ENCODE measurements at regions of chr2 and their contacts with region 1.

Region 1: DNA sequence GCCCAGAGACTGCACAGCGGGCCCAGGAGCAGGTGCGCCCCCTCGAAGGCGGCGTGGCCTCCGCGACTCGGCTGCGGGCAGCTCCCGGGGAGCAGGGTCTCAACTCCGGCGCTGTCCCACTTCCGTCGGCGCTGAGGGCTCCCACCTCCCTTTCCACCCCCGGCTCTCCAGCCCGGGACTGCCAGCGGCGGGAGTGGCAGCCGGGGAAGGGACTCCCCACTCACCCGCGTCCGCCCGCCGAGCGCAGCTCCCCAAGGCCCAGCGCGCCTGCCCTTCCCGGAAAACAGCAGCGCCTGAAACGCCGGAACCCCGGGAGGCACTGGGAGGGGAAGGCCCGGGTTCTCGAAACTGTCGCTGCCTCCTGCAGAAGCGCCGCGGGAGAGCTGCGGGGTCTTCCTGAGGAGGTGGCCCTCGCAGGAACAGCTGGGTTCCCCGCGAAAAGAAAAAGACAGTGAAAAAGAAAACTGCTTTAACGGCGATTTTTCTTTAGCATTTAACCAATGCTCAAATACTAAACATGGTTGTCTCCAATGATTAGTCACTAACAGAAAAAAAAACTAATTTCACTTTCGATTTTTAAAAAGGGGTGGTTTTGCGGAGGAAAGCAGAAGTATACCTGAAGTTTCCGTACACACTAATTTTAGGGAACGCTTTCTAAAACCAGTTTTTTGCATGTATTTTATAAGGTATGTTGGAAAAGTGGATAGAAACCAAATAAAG is at the start of gene NMI:
- DNase-seq: peak; percentile 18 to 88 (median 74)

Region 2: GRCh38 chr2:150878356-150878755 is 411.2 kb before region 1 on chr2:
- intact Hi-C with region 1: no loop called
- DNase-seq: no peak

Region 3: GRCh38 chr2:151114874-151115273 is 174.7 kb before region 1 on chr2:
- intact Hi-C with region 1: no loop called
- DNase-seq: no peak

Region 4: DNA sequence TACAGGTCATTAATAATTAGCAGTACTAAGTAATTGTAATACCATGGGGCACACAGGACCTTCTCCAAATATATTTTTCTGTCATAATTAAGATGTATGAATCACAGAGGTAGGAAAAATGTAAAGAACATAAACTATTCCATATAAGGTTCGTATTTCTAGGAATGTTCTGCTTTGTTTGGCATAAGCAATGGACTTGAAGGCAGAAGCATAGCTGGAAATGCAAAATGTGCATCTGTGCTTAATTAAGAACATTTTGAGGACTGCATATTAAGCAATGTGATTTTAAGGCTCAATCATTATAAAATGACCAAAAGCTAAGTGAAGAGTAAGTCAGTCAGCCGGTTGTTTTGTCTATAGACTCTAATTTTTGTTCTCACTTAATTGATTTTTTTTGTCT is 151.0 kb before region 1 on chr2:
- intact Hi-C with region 1: no loop called
- DNase-seq: no peak

Region 5: GRCh38 chr2:151200844-151201243 is 88.7 kb before region 1 on chr2:
- intact Hi-C with region 1: no loop called
- DNase-seq: no peak

Region 6: DNA sequence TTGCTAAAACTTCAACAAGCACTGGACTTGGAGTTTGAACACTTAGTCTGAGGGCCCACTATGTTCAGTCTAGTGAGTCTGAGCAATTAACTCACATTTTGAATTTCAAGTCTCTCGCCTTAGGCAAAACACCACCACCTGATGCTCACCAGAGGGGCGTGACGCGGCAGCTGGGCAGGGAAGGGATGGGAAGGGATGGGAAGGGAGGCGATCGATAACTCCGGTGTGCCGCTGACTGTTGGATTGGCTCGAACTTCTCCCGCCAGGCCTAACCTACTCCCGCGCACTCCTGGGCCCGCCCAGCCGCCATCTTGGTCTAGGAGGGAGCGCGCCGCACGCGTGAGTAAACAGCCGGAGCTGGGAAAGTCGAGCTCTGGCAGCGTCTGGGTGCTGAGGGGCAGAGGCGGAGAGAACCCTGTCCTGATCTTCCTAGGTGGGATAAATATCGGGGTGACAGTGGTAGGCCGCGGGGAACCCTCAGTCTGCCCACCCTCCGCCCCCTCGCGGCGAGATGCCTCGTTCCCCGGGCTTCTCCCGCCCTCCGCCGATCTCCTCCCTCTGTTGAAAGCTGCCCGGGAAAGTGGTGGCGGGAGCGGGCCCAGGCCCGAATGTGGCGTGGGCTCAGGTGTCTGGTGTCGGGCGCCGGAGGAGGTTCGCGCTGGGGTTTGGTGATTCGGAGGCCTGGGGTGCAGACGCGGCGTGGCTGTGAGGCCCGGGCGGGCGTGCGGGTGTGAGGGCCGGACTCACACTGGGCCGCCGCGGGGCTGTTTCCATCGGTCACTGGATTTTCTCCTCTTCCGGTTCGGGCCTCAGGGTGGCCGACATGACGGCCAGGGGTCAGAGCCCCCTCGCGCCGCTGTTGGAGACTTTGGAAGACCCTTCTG is 120.3 kb after region 1 on chr2 and contains the start of gene RIF1:
- intact Hi-C with region 1: loop called (anchors 10 kb)
- DNase-seq: peak; percentile 77 to 96 (median 89)

Measured in head of caudate nucleus (tissue), 42 donors.